ENCODE measurements at regions of chr12 and their contacts with region 1.

Region 1: GRCh38 chr12:15899282-15899870 is 11.8 kb upstream of the DERA start:
- DNase-seq: no peak
- ATAC-seq: no peak
- H3K4me3 ChIP-seq: no peak overlapping the region
- H3K27ac ChIP-seq: no peak overlapping the region
- H3K4me1 ChIP-seq: peaks cover 4% of the 10 kb centered on the region; the same call in 1 of the 2 replicates
- H3K27me3 ChIP-seq: no peaks in the 10 kb centered on the region
- CTCF ChIP-seq: peak; percentile 56
- POLR2A ChIP-seq: no peak
- RAD21 ChIP-seq: peak; percentile 46

Region 2: GRCh38 chr12:15532364-15532977 is 366.9 kb before region 1 on chr12:
- CTCF ChIA-PET with region 1: no interaction called
- POLR2A ChIA-PET with region 1: no interaction called
- dilution Hi-C with region 1: no loop called
- in situ Hi-C with region 1: no loop called
- intact Hi-C with region 1: no loop called
- DNase-seq: peak; percentile 77
- ATAC-seq: peak; percentile 86
- H3K4me3 ChIP-seq: no peak overlapping the region
- H3K27ac ChIP-seq: no peak overlapping the region
- H3K4me1 ChIP-seq: peaks cover 5% of the 10 kb centered on the region; the same call in 1 of the 2 replicates
- H3K27me3 ChIP-seq: no peaks in the 10 kb centered on the region
- CTCF ChIP-seq: peak; percentile 80
- POLR2A ChIP-seq: no peak
- RAD21 ChIP-seq: peak; percentile 84

Region 3: DNA sequence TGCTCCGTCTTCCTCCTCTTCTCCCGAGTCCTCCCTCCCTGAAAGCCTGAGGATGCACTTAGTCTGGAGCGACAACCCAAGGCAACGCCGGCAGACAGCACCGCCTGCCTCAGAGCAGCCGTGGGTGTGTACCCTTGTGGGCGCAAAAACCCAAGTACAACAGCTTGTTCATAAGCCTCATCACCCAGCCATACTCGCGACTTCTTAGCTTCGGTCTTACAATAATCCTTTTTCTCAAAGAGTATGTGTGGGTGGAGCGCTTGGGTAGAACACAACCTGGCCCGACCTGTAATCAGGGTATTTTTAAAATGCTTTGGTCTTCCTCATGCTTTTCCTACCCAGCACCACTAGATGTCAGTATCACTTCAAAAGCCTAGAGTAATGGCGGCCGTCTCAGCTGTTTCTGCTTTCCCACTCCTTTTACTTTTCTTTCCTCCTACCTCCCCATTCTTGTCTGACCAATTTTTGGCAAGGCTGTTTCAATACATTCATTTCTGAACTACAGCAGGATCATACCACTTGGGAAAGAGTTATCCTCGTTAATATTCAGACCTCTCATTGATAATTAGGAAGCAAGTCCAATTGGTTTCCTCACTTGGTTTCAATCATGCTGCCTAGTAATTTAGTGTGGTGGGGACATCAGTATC is 309.1 kb before region 1 on chr12:
- CTCF ChIA-PET with region 1: no interaction called
- POLR2A ChIA-PET with region 1: no interaction called
- dilution Hi-C with region 1: no loop called
- in situ Hi-C with region 1: no loop called
- intact Hi-C with region 1: loop called (anchors 5 kb)
- DNase-seq: peak; percentile 70
- ATAC-seq: peak; percentile 97
- H3K4me3 ChIP-seq: peak overlapping the region; percentile 37
- H3K27ac ChIP-seq: no peak overlapping the region
- H3K4me1 ChIP-seq: no peaks in the 10 kb centered on the region
- H3K27me3 ChIP-seq: peaks cover 2% of the 10 kb centered on the region; the same call in 1 of the 2 replicates
- CTCF ChIP-seq: peak; percentile 92
- POLR2A ChIP-seq: no peak
- RAD21 ChIP-seq: peak; percentile 97

Measured in IMR-90 (cell line).